ENCODE measurements at regions of chr6 and their contacts with region 1.

Region 1: GRCh38 chr6:63685446-63686379 is 50.1 kb downstream of the PHF3 start:
- DNase-seq: no peak
- H3K4me3 Mint-ChIP-seq: no peak overlapping the region
- H3K27ac Mint-ChIP-seq: no peak overlapping the region
- H3K4me1 Mint-ChIP-seq: peaks cover 32% of the 10 kb centered on the region
- H3K27me3 Mint-ChIP-seq: no peaks in the 10 kb centered on the region

Region 2: GRCh38 chr6:63476302-63476701 is 209.4 kb before region 1 on chr6:
- intact Hi-C with region 1: no loop called
- DNase-seq: no peak
- H3K4me3 Mint-ChIP-seq: no peak overlapping the region
- H3K27ac Mint-ChIP-seq: no peak overlapping the region
- H3K4me1 Mint-ChIP-seq: no peaks in the 10 kb centered on the region
- H3K27me3 Mint-ChIP-seq: peaks cover 4% of the 10 kb centered on the region

Region 3: DNA sequence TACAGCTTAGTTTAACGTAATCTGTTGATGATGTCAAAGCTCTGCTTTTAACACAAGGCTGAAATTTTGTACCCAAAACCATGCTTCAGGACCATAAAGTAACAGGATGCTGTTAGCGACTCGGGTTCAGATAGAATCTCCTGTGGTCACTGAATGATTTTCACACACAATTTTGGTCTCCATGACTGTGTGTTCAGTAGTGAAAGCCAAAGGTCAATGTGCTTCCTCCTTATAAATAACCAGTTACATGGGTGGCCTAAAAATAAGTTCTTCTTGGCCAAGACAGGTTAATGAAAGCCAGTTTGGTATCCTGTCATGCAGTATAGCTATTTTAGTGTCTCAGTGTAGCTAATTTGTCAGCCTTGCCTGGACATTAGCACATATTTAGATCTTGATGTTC is 132.5 kb before region 1 on chr6:
- intact Hi-C with region 1: no loop called
- DNase-seq: no peak
- H3K4me3 Mint-ChIP-seq: no peak overlapping the region
- H3K27ac Mint-ChIP-seq: no peak overlapping the region
- H3K4me1 Mint-ChIP-seq: no peaks in the 10 kb centered on the region
- H3K27me3 Mint-ChIP-seq: peaks cover 6% of the 10 kb centered on the region

Region 4: DNA sequence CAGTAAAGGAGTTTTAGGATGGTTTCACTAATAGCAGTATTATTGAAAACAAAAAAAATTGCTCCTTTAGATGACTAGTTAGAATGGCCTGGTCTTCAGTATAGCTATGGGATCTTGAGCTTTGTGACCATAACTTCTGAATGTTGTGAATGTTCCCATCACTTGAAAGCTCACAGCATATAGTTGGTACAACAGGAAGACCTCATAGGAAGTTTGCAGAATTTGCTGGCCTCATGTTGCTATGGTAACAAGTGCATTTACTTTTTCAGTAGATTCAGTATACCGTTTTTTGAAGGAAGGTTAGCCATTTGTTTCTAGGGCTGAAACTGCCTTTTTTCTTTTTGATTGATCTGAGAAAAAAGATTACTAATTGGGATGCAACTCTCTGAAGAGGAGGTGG is 41.9 kb before region 1 on chr6:
- intact Hi-C with region 1: loop called (anchors 2 kb)
- DNase-seq: no peak
- H3K4me3 Mint-ChIP-seq: no peak overlapping the region
- H3K27ac Mint-ChIP-seq: no peak overlapping the region
- H3K4me1 Mint-ChIP-seq: peaks cover 31% of the 10 kb centered on the region
- H3K27me3 Mint-ChIP-seq: no peaks in the 10 kb centered on the region

Region 5: DNA sequence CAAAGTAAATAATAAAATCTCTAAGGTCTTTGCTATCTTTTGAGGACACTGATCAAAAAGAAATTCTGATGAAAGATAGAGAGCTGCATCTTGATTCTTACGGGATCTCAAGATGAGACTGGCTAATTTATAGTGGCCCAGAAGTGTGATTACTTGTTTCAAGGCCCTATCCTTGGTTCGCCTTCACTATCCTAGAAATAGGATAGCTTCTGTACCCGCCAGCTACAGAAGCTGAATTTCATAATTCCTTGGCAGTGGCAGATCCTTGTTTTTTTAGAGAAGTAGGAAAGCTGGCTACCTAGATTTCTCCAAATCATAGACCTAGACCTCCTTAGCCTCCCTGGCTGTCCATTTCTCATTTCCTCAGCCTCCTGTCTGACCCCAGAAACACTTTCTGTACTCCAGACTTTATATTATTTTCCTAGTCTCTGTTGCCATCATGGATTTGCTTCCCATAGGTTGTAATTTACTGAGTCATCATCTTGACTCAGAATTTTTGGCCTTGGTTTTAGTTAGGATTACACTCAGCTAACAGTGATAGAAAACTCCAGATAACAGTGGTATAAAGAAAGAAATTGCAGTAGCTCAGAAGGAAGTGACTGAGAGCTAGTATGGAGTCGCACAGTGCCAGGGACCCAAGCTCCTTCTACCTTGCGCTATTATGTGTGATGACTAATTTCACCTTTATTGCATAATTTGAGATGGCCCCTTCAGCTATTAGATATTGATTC is 22.4 kb before region 1 on chr6:
- intact Hi-C with region 1: no loop called
- DNase-seq: no peak
- H3K4me3 Mint-ChIP-seq: no peak overlapping the region
- H3K27ac Mint-ChIP-seq: no peak overlapping the region
- H3K4me1 Mint-ChIP-seq: peaks cover 5% of the 10 kb centered on the region
- H3K27me3 Mint-ChIP-seq: no peaks in the 10 kb centered on the region

Region 6: DNA sequence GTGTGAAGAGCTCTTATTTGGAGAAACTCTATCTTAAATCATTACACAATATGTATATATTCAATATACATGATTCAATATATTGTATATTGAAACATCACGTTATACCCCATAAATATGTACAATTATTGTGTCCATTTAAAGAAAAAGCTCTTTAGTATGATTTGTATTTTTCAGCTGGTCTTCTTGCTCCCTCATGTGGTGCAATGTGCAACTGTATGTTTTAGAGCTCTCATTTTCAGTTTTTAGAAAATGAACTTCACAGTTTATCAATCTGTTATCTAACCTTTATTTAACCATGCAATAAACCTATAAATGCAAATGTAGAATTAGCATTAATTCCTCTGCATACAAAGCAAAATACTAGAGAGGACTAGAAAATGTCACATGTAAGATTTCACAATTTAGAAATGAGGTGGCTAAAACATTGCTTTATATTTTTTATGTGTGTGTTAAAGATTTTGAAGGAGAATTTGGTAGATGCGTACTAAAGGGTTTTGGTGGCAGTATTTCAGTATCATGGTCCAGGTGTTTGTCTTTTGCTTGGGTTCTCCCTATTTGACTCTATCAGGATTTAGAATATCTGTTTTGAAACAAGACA is 117.0 kb after region 1 on chr6:
- intact Hi-C with region 1: no loop called
- DNase-seq: no peak
- H3K4me3 Mint-ChIP-seq: no peak overlapping the region
- H3K27ac Mint-ChIP-seq: no peak overlapping the region
- H3K4me1 Mint-ChIP-seq: no peaks in the 10 kb centered on the region
- H3K27me3 Mint-ChIP-seq: no peaks in the 10 kb centered on the region

Measured in activated T-helper 1 cell treated with anti-CD3 and anti-CD28 coated beads, Interleukin-12 subunit alpha, Interleukin-12 subunit beta, Interleukin-2, Interleukin-4 antibody, amounts not matched to agents 30 ng/mL and 10 ng/mL and 1 ng/mL, durations not matched to agents 14 hours and 24 hours and 36 hours (primary cell).